HAP-1 (cell line): ENCODE measurements at regions of chr7 and their contacts with region 1.

Region 1: DNA sequence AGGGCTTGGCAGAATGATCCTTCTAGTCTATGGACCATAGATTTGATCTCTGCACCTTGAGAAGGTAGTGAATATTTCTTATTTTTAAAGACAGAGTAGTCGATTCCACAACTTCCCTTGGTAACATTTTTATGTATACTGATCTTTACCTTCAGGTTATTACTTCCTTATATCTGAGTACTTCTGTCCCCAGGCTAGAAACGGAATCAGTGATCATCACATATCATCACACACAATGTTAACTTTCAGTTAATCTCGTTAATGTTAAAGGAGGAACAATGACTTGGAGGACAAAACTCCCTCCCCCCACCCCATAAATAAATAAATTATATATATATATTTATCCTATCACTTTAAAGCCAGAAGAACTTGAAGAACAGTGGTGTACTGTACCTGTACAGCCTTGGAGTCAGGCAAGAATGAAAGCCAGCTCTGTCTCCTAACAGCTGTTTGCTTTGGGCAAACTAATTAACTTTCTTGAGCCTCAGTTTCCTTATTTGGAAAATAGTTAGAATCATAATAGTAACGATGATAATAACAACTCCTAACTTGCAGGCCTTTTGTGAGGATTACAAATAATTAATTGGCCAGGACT is 63.7 kb downstream of the SAMD9 start:
- DNase-seq: no peak
- H3K4me3 ChIP-seq: no peak overlapping the region
- H3K4me1 ChIP-seq: no peaks in the 10 kb centered on the region
- H3K27me3 ChIP-seq: peaks cover 19% of the 10 kb centered on the region

Region 2: GRCh38 chr7:92621026-92621540 is 433.0 kb before region 1 on chr7:
- in situ Hi-C with region 1: loop called (anchors 5 kb)
- DNase-seq: peak; percentile 77 to 80
- H3K4me3 ChIP-seq: no peak overlapping the region
- H3K4me1 ChIP-seq: no peaks in the 10 kb centered on the region
- H3K27me3 ChIP-seq: no peaks in the 10 kb centered on the region

Region 3: GRCh38 chr7:92797693-92798092 is 256.4 kb before region 1 on chr7:
- in situ Hi-C with region 1: no loop called
- DNase-seq: no peak
- H3K4me3 ChIP-seq: no peak overlapping the region
- H3K4me1 ChIP-seq: peaks cover 31% of the 10 kb centered on the region
- H3K27me3 ChIP-seq: no peaks in the 10 kb centered on the region